Posterior cingulate gyrus (tissue), 11 donors: ENCODE measurements at regions of chr4 and their contacts with region 1.

Region 1: GRCh38 chr4:157992038-157992705 is 180.7 kb downstream of the GASK1B start:
- DNase-seq: peak in 1 of 10 donors; percentile 46

Region 2: DNA sequence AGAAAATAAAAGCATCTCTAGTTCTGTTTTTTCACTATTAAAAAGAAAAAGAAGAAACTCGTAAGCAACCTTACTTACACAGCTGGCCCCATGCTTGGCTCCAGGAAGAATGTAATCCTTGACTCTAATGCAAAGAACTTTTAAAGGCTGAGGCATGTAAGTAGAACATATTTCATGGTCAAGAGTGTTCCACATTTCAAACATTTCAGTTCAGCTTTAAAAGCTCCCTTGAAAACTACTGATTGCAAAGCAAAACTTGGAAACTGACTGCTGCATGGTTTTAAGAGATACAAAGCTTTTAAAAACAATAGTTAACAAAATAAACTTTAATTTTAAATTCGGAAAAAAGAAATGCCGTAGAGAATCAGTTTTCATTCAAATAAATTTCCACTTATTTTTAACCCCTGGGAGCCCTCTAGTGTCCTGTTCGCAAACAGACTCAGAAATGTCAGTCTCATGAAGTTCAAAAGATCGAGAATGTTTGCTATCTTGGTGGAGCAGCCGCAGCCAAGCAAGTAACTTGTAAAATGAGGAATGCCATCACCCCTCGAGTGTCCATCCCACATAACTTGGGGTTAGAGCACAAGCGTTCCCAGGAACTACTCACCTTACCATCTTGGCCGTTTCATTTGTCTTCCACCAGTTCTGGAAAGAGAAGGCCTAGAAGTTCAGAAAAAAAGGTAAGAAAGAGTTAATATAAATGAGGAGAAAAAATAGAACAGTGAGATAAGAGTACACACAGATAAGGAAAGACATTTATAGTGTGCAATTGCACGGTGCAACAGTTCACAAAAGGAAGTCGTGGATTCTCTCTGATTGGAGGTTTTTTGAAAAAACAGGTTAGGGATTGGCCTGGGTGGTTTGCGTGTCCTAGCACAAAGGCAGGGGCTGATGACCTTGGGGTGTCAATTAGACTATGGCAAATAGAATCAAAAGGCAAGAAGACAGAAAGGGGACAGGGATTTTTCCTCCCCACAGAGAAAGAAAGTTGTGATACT is 180.4 kb after region 1 on chr4 and contains the start of gene GASK1B:
- intact Hi-C with region 1: loop called (anchors 2 kb)
- DNase-seq: peak in 2 of 10 donors; percentile 11 to 45